ENCODE measurements at regions of chr2 and their contacts with region 1.

Region 1: DNA sequence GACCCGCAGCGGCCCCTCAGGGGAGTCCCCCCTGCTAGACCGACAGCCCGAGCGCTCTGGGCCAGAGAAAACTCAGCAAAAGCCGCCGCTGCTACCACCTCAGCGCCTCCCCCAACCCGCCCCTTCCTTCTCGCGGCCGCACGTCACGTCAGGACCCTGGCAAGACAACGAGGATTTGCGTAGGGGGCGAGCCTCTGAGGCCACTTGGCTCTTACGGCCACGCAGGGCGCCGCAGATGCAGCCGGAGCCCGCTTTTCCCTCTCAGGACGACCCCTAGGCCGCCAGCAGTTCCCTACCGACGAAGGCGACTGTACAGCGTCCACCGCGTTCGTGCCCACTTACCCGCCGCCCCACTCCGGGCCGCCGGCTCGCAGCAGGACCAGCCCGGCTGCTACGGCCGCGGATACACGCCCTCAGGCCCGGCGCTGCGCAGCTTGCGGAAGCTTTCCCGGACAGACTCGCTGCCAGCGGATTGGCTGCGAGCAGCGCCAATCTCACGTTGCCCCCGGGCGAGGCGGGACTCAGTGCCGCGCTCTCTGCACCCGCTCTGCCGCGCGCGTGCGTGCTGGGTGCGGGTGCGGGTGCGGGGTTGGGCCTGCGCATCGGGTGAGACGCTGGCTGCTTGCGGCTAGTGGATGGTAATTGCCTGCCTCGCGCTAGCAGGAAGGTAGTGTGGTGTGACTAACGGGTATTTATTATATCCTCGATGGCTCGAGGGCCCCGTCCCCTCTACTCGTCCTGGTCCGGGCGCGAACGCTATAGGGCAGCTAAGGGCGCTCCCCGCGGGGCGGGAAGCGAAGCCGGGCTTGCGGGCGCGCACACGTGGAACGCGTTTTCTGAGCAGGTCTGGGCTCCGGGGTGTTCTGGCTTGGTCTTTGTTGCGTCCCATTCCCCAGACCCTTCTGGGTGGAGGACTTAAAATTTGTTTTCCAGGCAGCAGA is at the starts of genes ORMDL1 and PMS1:
- DNase-seq: peak; percentile 96
- H3K4me3 Mint-ChIP-seq: peak within 1 kb of the TSS; percentile 90
- H3K27ac Mint-ChIP-seq: peak within 1 kb of the TSS; percentile 95
- H3K4me1 Mint-ChIP-seq: peaks cover 52% of the 10 kb centered on the region
- H3K27me3 Mint-ChIP-seq: no peaks in the 10 kb centered on the region
- total RNA-seq, gene ORMDL1: 47.0 to 49.8 TPM
- total RNA-seq, gene PMS1: 36.0 to 38.6 TPM

Region 2: GRCh38 chr2:189440947-189441708 is 343.1 kb before region 1 on chr2 and contains the start of gene WDR75:
- CTCF ChIA-PET with region 1: no interaction called
- POLR2A ChIA-PET with region 1: no interaction called
- intact Hi-C with region 1: loop called (anchors 1 kb)
- DNase-seq: peak; percentile 94
- H3K4me3 Mint-ChIP-seq: no peak within 1 kb of the TSS
- H3K27ac Mint-ChIP-seq: peak within 1 kb of the TSS; percentile 99
- H3K4me1 Mint-ChIP-seq: peaks cover 11% of the 10 kb centered on the region
- H3K27me3 Mint-ChIP-seq: no peaks in the 10 kb centered on the region
- total RNA-seq, gene WDR75: 66.4 to 68.8 TPM

Region 3: DNA sequence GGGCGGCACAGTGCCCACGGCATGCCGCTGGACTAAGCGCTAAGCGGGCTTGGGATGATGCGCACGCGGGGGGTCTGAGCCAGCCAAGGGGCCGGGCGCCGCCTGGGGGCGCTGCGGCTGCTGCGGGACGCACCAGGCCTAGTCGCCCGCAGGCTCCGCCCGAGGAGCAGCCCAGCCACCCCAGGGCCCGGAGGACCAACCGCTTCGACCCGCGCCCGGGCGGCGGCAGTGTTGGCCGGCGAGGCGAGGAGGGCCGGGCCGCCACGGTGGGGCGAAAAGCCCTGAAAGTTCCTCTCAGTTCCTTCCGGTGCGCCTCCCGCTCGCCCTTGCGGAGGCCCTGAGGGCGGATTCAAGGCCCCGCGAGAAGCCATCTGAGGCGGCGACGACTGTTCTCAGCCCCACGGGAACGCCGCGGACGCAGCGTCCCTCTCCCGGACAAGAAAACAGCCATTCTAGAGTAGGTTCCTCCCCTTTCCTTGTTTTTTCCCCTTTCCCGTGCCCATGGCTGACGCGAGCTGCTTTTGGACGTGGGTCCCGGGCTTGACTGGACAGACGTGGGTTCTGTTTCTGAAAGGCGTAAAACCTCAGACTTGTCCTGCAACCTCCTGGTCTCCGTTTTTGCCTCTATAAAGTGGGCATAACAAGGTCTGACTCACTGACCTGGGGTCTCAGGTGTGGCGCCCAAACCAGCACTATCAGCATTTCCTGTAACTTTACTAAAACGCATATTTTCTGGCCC is 109.7 kb before region 1 on chr2 and contains the start of gene ANKAR:
- CTCF ChIA-PET with region 1: no interaction called
- POLR2A ChIA-PET with region 1: interaction called, 4 read pairs
- intact Hi-C with region 1: loop called (anchors 1 kb)
- DNase-seq: peak; percentile 86
- H3K4me3 Mint-ChIP-seq: peak within 1 kb of the TSS; percentile 92
- H3K27ac Mint-ChIP-seq: peak within 1 kb of the TSS; percentile 96
- H3K4me1 Mint-ChIP-seq: peaks cover 30% of the 10 kb centered on the region
- H3K27me3 Mint-ChIP-seq: no peaks in the 10 kb centered on the region
- total RNA-seq, gene ANKAR: 3.4 to 4.2 TPM

Region 4: GRCh38 chr2:189762551-189763298 is 21.5 kb before region 1 on chr2 and contains the start of gene OSGEPL1:
- CTCF ChIA-PET with region 1: interaction called, 26 read pairs
- POLR2A ChIA-PET with region 1: interaction called, 20 read pairs
- intact Hi-C with region 1: loop called (anchors 1 kb)
- DNase-seq: peak; percentile 95
- H3K4me3 Mint-ChIP-seq: peak within 1 kb of the TSS; percentile 91
- H3K27ac Mint-ChIP-seq: peak within 1 kb of the TSS; percentile 96
- H3K4me1 Mint-ChIP-seq: peaks cover 9% of the 10 kb centered on the region
- H3K27me3 Mint-ChIP-seq: no peaks in the 10 kb centered on the region
- total RNA-seq, gene OSGEPL1: 11.1 to 11.7 TPM

Region 5: GRCh38 chr2:190319555-190320498 is 535.6 kb after region 1 on chr2 and contains the start of gene HIBCH:
- CTCF ChIA-PET with region 1: no interaction called
- POLR2A ChIA-PET with region 1: no interaction called
- intact Hi-C with region 1: loop called (anchors 1 kb)
- DNase-seq: peak; percentile 96
- H3K4me3 Mint-ChIP-seq: peak within 1 kb of the TSS; percentile 87
- H3K27ac Mint-ChIP-seq: peak within 1 kb of the TSS; percentile 94
- H3K4me1 Mint-ChIP-seq: peaks cover 52% of the 10 kb centered on the region
- H3K27me3 Mint-ChIP-seq: no peaks in the 10 kb centered on the region
- total RNA-seq, gene HIBCH: 33.9 to 37.8 TPM

Region 6: GRCh38 chr2:191020221-191020741 is 1236.1 kb after region 1 on chr2:
- CTCF ChIA-PET with region 1: no interaction called
- POLR2A ChIA-PET with region 1: no interaction called
- intact Hi-C with region 1: loop called (anchors 10 kb)
- DNase-seq: peak; percentile 97
- H3K4me3 Mint-ChIP-seq: no peak overlapping the region
- H3K27ac Mint-ChIP-seq: no peak overlapping the region
- H3K4me1 Mint-ChIP-seq: peaks cover 34% of the 10 kb centered on the region
- H3K27me3 Mint-ChIP-seq: peaks cover 2% of the 10 kb centered on the region

Measured in activated CD4-positive, alpha-beta memory T cell treated with anti-CD3 and anti-CD28 coated beads for 36 hours (primary cell).